ENCODE measurements at regions of chr3 and their contacts with region 1.

Region 1: DNA sequence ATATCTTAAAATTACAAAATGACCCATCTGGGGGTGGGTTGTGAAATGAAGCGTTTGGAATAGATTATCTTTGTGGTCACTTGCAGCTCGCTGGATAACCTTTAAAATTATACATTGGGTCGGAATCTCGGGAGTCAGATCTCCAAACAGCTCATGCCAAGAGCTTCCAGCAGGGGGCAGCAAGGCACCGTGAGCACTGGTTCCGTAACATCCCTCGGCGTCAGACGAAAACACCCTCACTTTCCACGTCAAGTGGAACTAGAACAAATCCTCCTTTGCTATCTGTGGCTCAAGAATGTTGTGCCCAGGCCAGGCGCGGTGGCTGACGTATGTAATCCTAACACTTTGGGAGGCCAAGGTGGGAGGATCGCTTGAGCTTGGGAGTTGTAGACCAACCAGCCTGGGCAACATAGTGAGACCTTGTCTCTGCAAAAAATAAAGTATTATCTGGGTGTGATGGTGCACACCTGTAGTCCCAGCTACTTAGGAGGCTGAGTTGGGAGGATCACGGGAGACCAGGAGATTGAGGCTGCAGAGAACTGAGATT is 31.1 kb downstream of the UMPS start:
- DNase-seq: peak; percentile 55 to 65
- H3K4me3 ChIP-seq: no peak overlapping the region
- H3K27ac ChIP-seq: no peak overlapping the region
- H3K4me1 ChIP-seq: peaks cover 13% of the 10 kb centered on the region
- H3K27me3 ChIP-seq: no peaks in the 10 kb centered on the region
- CTCF ChIP-seq: peak; percentile 95

Region 2: DNA sequence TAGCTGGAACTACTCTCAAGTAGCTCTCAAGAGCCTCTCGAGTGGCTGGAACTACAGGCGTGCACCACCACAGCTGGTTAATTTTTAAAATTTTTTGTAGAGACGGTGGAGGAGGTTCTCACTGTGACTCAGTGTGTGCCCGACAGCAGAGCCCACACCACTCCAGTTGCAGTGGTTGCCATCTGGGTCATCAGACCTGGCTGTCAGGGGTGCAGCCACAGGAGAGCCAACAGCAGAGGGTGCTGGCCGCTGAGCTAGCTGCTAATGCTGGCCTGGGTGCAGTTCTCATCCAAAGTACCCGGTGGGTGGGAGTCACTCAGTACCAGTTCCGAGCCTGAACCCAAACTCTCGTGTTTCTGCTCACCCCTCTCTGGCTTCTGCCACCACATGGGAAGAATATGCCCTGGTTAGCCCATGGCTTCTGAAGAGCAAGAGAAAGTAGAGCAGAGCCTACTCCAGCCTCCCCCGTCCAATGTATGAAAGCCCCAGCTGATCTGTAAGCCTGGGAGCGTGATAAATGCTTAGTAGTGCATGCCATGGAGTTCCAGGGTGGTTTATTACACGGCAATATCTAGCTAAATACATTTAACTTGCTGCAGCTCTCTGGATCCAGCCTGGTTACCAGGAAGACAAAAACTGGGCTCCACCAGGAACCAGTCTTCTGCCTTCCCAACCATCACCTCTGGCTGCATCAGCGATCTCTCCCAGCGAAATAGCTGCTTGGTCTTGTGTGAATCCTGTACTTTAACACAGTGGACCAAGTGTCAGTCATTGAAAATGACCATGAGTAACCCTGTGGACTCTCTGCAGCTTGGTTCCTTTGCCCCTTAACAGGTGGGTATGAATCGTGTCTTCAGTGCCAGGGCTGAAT is 14.0 kb before region 1 on chr3:
- CTCF ChIA-PET with region 1: no interaction called
- POLR2A ChIA-PET with region 1: interaction called, 24 read pairs
- intact Hi-C with region 1: no loop called
- DNase-seq: no peak
- H3K4me3 ChIP-seq: no peak overlapping the region
- H3K27ac ChIP-seq: no peak overlapping the region
- H3K4me1 ChIP-seq: no peaks in the 10 kb centered on the region
- H3K27me3 ChIP-seq: no peaks in the 10 kb centered on the region
- CTCF ChIP-seq: no peak

Region 3: DNA sequence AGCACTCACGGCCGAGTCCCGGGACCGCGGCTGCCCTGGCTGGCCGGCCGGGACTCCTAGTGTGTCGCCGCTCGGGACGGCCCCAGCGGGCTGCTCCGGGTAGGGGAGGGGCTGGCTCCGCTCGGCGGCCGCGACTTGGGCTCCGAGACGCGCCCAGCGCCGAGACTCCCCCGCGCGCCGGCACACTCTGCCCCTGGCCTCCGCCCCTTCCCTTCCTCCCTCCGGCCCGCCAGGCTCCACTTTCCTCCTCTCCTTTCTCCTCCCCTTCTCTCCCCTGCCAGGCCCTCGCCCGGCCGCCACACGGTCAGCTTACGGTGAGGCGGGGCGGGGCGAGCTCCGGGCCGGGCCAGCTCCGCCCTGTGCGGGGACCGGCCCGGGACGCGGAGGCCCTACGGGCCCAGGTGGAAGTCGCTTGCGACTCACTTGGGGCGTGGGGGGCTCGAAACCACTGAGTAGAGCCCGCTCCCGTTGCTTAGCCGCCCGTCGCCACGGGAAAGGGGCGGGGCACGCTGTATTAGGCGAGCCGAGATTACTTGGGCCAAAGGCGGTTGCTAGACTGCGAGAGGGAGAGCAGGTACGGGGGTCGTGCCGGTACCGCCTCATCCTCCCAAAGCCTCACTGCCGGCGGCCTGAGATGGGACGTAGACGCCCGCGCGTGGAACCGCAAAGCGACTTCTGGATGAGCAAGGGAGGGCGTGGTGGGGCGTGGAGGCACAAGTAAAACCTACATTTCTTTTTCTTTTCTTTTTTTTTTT is 126.0 kb after region 1 on chr3 and contains the start of gene ITGB5:
- CTCF ChIA-PET with region 1: interaction called, 13 read pairs
- POLR2A ChIA-PET with region 1: no interaction called
- intact Hi-C with region 1: no loop called
- DNase-seq: peak; percentile 56 to 89
- H3K4me3 ChIP-seq: peak within 1 kb of the TSS; percentile 84
- H3K27ac ChIP-seq: peak within 1 kb of the TSS; percentile 69
- H3K4me1 ChIP-seq: peaks cover 41% of the 10 kb centered on the region
- H3K27me3 ChIP-seq: no peaks in the 10 kb centered on the region
- CTCF ChIP-seq: no peak
- total RNA-seq, gene ITGB5: 226 and 287 TPM in 2 replicates

Region 4: DNA sequence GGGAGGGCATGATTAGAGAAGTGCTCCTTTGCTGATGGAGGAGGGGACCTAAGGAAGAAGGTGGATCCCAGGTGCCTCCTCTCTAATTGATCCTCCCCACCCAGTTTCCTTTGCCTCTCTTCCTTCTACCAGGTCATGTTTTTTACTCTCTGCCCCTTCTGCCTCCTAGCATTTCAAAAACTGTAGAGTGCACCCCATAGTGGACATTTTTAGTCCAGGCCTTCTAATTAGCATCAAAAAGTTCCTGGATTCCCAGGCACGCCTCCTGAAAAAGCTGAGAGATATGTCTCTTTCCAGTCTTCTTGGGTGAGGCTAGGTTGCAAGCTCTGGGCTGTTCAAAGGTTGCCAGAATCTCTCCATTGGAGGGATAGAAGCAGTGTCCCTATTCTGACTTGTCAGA is 144.5 kb after region 1 on chr3:
- CTCF ChIA-PET with region 1: interaction called, 17 read pairs
- POLR2A ChIA-PET with region 1: no interaction called
- intact Hi-C with region 1: loop called (anchors 1 kb)
- DNase-seq: no peak
- H3K4me3 ChIP-seq: no peak overlapping the region
- H3K27ac ChIP-seq: no peak overlapping the region
- H3K4me1 ChIP-seq: no peaks in the 10 kb centered on the region
- H3K27me3 ChIP-seq: no peaks in the 10 kb centered on the region
- CTCF ChIP-seq: no peak

Region 5: DNA sequence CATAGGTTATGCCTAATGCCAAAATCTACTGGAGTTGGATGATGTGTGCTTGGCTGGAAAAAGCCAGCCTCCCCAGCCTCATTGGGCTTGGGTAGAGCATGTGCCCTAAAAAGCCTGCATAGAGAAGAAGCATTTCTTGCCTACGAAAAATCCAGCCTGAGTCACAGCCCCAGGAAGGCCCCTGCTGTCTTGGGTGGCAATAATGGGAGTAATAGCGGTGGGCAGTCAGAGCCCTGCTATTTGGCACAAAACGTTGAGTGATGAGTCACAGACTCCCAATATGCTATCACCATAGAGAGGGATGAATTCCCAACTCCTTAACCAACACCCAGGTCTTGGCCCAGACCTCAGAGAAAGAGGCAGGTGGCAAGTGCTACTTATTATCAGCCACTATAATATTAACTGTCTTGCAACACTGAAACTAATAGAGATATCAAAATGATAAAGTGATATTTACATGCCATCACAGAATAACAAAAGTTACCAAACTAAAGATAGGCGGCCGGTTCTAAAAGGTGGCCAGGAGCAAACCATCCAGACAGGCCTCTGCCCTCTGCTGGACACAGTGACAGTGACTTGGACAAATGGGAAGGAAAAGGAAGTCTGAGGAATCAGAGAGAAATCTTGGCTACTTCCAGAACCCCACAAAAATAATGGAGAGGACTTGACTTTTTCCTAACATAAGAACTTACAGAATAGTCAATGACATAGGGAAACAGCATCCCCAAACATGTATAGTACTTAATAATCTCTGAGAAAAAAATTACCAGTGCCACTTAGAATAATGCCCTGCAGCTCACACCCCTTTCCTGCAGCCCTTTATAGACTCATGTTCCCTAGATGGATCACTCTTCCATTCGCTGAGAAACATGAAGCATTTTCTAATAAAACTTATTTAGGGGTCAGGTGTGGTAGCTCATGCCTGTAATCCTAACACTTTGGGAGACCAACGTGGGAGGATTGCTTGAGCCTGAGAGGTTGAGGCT is 225.1 kb after region 1 on chr3:
- CTCF ChIA-PET with region 1: no interaction called
- POLR2A ChIA-PET with region 1: no interaction called
- intact Hi-C with region 1: loop called (anchors 1 kb)
- DNase-seq: peak; percentile 75 to 87
- H3K4me3 ChIP-seq: no peak overlapping the region
- H3K27ac ChIP-seq: peak overlapping the region; percentile 83
- H3K4me1 ChIP-seq: peaks cover 28% of the 10 kb centered on the region
- H3K27me3 ChIP-seq: no peaks in the 10 kb centered on the region
- CTCF ChIP-seq: peak; percentile 74

Region 6: DNA sequence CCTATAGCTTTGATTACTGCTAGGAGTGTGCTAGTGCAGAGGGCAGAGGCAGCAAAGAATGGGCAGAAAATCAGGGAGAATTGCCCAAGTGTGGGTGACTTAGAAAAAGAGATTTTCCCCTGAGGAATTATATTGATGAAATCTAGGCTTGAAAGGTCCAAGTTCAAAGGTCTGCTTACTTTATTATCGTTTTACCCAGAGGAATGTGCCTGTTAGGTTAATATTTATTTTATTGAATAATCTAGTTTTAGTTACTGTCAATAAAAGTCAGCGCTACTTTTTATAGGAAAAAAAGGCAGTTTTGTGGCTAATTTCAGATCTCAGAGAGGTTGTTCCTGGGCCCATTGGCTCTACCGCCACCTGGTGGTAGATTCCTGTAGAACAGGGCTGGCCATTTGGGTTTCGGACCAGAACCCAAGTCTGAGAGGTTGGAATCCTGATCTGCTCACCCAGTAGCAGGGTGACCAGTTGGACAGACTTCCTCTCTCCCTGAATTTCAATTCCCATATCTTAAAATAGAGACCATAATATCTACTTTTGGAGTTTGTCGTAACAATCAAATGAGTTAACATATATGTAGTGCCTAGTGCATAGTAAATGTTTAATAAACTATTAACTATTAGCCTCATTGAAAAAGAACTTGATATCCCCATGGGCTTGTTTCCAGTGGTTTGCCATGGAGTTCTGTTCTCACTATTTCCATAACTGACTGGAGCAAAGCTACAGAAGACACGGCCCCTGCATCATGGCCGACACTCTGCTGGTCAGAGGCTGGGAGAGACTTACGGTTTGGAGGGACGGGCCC is 676.5 kb after region 1 on chr3:
- CTCF ChIA-PET with region 1: no interaction called
- POLR2A ChIA-PET with region 1: no interaction called
- intact Hi-C with region 1: loop called (anchors 5 kb)
- DNase-seq: peak in 1 of 2 experiments; percentile 51
- H3K4me3 ChIP-seq: no peak overlapping the region
- H3K27ac ChIP-seq: no peak overlapping the region
- H3K4me1 ChIP-seq: peaks cover 8% of the 10 kb centered on the region
- H3K27me3 ChIP-seq: no peaks in the 10 kb centered on the region
- CTCF ChIP-seq: peak; percentile 99

Region 7: GRCh38 chr3:125585595-125586223 is 824.4 kb after region 1 on chr3:
- CTCF ChIA-PET with region 1: interaction called, 3 read pairs
- POLR2A ChIA-PET with region 1: no interaction called
- intact Hi-C with region 1: loop called (anchors 2 kb)
- DNase-seq: peak; percentile 55 to 56
- H3K4me3 ChIP-seq: no peak overlapping the region
- H3K27ac ChIP-seq: no peak overlapping the region
- H3K4me1 ChIP-seq: no peaks in the 10 kb centered on the region
- H3K27me3 ChIP-seq: no peaks in the 10 kb centered on the region
- CTCF ChIP-seq: peak; percentile 84